Heart left ventricle (tissue), 16 donors: ENCODE measurements at regions of chr1 and their contacts with region 1.

Region 1: DNA sequence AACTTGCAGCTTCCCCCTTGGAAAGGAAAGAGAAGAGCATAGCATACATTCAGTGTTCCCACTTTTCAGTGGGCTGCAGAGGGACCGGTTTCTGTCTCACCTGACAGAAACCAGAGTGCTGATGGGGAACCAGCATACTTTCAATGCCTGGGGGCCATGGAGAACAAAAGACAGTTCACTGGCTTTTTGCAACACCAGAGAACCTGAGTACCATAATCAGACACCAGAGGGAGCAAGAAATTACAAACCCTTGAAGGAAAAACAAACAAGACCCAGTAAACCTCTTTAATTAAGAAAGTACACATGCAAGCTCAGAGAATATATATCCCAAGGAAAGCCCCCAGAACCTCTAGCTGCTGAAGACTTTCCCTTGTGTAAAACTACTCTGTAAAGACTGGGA is 51.1 kb downstream of the CSMD2 start:
- DNase-seq: no peak
- ATAC-seq: no peak
- H3K4me3 ChIP-seq: no peak overlapping the region
- H3K27ac ChIP-seq: no peak overlapping the region
- H3K4me1 ChIP-seq: no peaks in the 10 kb centered on the region
- H3K27me3 ChIP-seq: no peaks in the 10 kb centered on the region
- CTCF ChIP-seq: peak in 8 of 12 donors; percentile 9 to 43 (median 28)
- POLR2A ChIP-seq: no peak

Region 2: DNA sequence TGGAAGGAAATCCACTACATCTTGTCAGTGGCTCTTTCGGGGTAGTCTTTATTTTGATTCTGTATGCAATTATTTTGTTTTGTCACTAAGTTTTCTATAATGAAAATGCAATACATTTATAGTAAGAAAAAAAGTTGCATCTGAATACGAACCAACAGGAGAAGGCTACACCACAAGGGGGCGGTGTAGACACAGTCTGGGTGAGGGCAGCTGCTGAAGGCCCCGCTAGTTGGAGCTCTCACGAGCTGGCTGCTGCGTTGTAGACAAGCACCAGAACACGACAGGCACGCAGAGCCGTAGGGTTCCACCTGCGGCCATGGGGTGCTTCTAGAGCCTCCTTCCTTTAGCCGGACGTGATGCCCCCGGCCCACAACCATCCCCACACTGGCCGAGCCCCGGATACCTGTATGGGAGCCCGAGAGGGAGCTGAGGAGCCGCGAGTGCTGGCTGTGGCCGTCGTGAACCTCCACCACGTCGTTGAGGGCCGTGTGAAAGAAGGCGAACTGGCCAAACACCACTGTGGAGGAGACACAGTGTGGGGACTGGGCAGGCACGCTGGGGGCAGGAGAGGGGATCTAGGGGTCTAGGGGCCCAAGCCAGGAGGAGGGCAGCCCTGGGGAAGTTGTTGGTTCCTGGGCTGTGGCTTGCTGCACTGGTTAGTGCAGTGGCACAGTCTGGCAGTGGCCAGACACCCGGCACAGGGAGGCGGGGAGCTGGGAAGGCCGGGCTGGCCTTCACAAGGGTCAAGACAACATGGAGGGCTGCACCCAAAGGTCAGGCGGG is 480.7 kb before region 1 on chr1:
- intact Hi-C with region 1: loop called in 1 of 10 experiments (anchors 10 kb)
- DNase-seq: peak; percentile 88 to 93 (median 89)
- ATAC-seq: peak; percentile 35 to 89 (median 84)
- H3K4me3 ChIP-seq: no peak overlapping the region
- H3K27ac ChIP-seq: no peak overlapping the region
- H3K4me1 ChIP-seq: peaks cover 0 to 11% (median 0%) of the 10 kb centered on the region in 12 donors
- H3K27me3 ChIP-seq: peaks cover 0 to 19% (median 0%) of the 10 kb centered on the region in 9 donors
- CTCF ChIP-seq: peak; percentile 94 to 100 (median 97)
- POLR2A ChIP-seq: no peak

Region 3: DNA sequence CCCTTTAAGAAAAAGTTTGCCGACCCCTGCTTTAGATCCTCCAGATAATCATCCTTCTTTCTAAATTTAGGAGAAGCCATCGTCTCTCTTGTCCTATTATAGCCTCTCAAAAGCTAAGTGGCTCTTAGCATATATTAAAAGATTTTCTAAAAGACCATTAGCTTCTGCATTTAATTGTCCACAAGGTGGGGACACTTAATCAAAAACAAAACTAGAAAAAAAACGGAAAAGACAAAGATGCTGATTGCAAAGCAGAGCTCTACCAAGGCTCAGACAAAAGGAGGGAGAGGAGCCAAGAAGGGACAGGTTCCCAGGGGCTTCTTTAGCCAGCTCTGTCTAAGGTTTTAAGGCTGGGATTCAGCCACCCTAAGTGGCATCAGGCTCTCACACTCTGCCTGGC is 378.3 kb before region 1 on chr1:
- intact Hi-C with region 1: loop called in 2 of 10 experiments (anchors 5 kb)
- DNase-seq: no peak
- ATAC-seq: no peak
- H3K4me3 ChIP-seq: no peak overlapping the region
- H3K27ac ChIP-seq: no peak overlapping the region
- H3K4me1 ChIP-seq: no peaks in the 10 kb centered on the region
- H3K27me3 ChIP-seq: peaks cover 0 to 8% (median 0%) of the 10 kb centered on the region in 9 donors
- CTCF ChIP-seq: peak in 10 of 12 donors; percentile 5 to 45 (median 38)
- POLR2A ChIP-seq: no peak

Region 4: DNA sequence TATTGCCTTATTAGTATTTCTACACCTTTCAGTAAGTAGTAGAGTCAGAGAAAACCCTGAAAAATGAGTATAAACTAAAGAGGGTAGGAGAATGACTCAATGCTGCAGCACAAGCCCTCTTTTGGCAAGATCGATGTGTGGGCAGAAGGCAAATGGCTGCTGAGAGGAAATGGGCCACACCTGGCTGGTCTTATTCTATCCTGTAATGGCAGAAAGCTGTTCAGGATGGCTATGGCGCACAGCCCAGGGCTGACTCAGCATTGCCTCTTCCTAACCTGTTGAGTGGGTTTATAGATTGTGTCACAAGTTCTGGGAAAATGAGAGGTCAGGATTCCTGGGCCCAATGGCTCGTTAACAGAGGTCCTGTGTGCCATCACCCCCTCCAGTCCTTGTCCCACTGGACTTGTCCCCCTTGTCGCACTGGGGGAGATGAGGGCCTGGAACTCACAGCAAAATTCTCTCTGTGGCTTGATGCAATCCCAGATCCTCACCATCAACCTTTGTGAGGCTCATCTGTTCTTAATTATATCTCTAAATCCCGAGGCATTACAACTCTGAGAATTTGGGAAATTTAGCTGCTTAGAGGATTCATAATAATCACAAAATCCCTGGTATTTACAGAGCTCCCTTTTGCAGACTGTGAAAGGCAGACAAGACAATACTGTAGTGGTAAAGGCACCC is 236.8 kb before region 1 on chr1:
- intact Hi-C with region 1: loop called in 4 of 10 experiments (anchors 2 to 10 kb)
- DNase-seq: peak in 4 of 5 donors; percentile 33 to 81 (median 54)
- ATAC-seq: peak in 2 of 4 donors; percentile 60 to 91
- H3K4me3 ChIP-seq: no peak overlapping the region
- H3K27ac ChIP-seq: peak overlapping the region in 1 of 12 donors; percentile 4
- H3K4me1 ChIP-seq: peaks cover 0 to 13% (median 0%) of the 10 kb centered on the region in 12 donors
- H3K27me3 ChIP-seq: peaks cover 0 to 8% (median 0%) of the 10 kb centered on the region in 9 donors
- CTCF ChIP-seq: no peak
- POLR2A ChIP-seq: no peak

Region 5: GRCh38 chr1:34213956-34214355 is 100.1 kb after region 1 on chr1:
- intact Hi-C with region 1: no loop called
- DNase-seq: no peak
- ATAC-seq: no peak
- H3K4me3 ChIP-seq: no peak overlapping the region
- H3K27ac ChIP-seq: no peak overlapping the region
- H3K4me1 ChIP-seq: no peaks in the 10 kb centered on the region
- H3K27me3 ChIP-seq: peaks cover 0 to 44% (median 3%) of the 10 kb centered on the region in 9 donors
- CTCF ChIP-seq: no peak
- POLR2A ChIP-seq: no peak

Region 6: DNA sequence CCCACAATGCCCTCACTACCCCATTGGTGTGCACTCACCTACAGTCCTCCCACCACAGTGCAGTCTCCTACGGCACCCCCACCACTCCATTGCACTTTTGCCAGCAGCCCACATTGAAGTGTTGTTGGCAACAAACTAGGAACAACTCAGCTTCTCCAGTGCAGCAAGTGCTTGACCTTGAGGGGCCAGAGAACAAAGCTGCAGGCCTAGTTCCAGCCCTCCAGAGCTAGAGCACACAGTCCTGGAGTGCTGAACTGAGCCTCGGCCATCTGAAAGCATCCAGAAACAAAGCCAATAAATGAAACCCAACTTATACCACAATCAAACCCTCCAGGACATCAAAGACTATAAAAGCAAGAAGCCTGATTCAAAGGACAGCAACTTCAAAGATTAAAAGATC is 192.7 kb after region 1 on chr1:
- intact Hi-C with region 1: no loop called
- DNase-seq: no peak
- ATAC-seq: no peak
- H3K4me3 ChIP-seq: no peak overlapping the region
- H3K27ac ChIP-seq: no peak overlapping the region
- H3K4me1 ChIP-seq: no peaks in the 10 kb centered on the region
- H3K27me3 ChIP-seq: peaks cover 0 to 5% (median 0%) of the 10 kb centered on the region in 9 donors
- CTCF ChIP-seq: no peak
- POLR2A ChIP-seq: no peak

Region 7: GRCh38 chr1:34597877-34598514 is 484.1 kb after region 1 on chr1:
- intact Hi-C with region 1: loop called in 6 of 10 experiments (anchors 2 to 10 kb)
- DNase-seq: peak; percentile 32 to 71 (median 51)
- ATAC-seq: peak in 3 of 4 donors; percentile 54 to 80 (median 67)
- H3K4me3 ChIP-seq: no peak overlapping the region
- H3K27ac ChIP-seq: no peak overlapping the region
- H3K4me1 ChIP-seq: no peaks in the 10 kb centered on the region
- H3K27me3 ChIP-seq: peaks cover 0 to 35% (median 10%) of the 10 kb centered on the region in 9 donors
- CTCF ChIP-seq: peak; percentile 40 to 76 (median 64)
- POLR2A ChIP-seq: no peak

Region 8: DNA sequence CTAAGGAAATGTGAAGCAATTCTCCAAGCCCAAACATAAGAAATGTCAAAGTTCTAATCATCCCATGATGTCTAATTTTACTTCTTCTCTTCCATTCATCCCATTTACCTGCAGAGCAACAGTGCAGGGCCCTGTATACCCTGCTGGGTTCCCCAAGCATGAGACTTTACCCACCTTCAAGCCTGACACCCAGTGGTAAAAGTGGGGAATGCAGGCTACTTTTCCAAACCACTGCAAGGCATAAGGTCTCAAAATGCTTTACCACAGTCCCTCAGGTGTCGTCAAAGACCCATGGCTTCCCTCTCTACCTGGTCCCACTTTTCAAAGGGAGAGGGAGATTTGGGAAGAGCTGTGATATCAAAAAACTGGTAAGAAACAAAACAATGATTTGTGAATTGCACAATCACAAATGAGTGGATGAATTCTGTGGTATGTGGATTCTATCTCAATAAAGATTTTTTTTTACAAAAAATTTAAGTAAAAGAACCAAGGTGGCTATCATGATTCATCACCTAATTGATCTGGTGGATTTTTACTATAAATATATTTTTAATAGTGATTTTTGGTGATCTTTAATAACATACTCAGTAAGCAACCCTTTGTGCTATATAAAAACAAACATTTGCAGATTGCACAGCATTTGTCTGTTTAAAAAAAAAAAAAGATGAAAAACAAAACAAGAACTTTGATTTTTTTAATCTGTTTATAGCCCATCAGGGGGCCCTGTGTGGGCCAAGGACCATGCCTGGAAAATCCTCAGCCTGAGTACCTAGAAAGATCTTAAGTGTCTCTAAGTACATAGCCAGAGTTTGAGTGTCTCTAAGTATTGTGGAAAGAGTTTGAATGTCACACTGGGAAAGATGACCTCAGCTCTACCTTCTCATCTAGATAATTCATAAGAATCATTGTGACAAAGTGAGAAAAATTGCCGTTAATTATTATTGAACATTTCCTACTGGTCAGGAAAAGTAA is 567.9 kb after region 1 on chr1:
- intact Hi-C with region 1: loop called in 1 of 10 experiments (anchors 10 kb)
- DNase-seq: no peak
- ATAC-seq: peak in 1 of 4 donors; percentile 52
- H3K4me3 ChIP-seq: no peak overlapping the region
- H3K27ac ChIP-seq: no peak overlapping the region
- H3K4me1 ChIP-seq: no peaks in the 10 kb centered on the region
- H3K27me3 ChIP-seq: peaks cover 0 to 22% (median 0%) of the 10 kb centered on the region in 9 donors
- CTCF ChIP-seq: peak; percentile 54 to 79 (median 68)
- POLR2A ChIP-seq: no peak

Region 9: GRCh38 chr1:34742667-34743270 is 628.9 kb after region 1 on chr1:
- intact Hi-C with region 1: loop called in 8 of 10 experiments (anchors 2 to 10 kb)
- DNase-seq: peak; percentile 66 to 86 (median 70)
- ATAC-seq: peak; percentile 81 to 96 (median 88)
- H3K4me3 ChIP-seq: no peak overlapping the region
- H3K27ac ChIP-seq: no peak overlapping the region
- H3K4me1 ChIP-seq: no peaks in the 10 kb centered on the region
- H3K27me3 ChIP-seq: peaks cover 0 to 25% (median 5%) of the 10 kb centered on the region in 9 donors
- CTCF ChIP-seq: peak; percentile 86 to 98 (median 94)
- POLR2A ChIP-seq: no peak